OCI-LY7 (cell line): ENCODE measurements at regions of chr9 and their contacts with region 1.

Region 1: DNA sequence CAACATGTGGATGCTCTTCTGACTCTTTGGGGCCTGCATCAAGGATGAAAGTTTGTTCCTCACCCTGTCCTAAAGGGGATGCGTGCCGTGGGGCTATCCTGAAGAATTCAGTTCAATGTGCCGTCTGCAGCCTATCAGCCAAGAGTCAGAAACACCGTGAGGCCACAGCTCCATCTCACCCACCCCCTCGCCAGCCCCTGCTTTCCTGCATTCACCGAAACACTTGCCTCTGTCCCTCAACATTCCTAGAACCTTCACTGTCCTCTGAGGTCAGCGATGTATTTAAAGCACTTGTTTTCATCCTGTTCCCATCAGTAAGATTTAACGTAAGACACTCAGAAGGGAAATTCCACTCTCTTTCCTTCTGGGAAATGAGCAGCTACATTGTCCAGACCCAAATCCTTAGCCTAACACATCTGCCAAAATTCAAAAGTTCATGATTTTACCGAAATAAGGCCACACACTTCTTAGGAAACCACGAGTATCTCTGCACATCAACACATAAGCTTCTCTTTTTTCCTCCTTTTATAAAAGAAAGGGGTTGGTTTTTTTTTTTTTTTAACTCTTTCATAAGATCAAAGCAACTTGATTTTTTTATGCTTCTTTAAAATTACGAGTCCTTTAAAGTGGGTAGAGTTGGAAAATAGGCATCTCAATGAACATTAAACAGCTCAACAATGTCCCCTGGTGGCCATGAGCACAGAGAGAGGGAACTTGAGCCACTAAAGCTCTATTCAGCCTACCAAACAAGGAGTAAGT is 100.7 kb downstream of the SUSD1 start:
- DNase-seq: peak; percentile 58
- H3K4me3 ChIP-seq: no peak overlapping the region
- H3K27ac ChIP-seq: no peak overlapping the region
- H3K4me1 ChIP-seq: peaks cover 8% of the 10 kb centered on the region
- CTCF ChIP-seq: peak; percentile 96

Region 2: GRCh38 chr9:111759762-111760639 is 314.4 kb before region 1 on chr9:
- CTCF ChIA-PET with region 1: interaction called, 6 read pairs
- POLR2A ChIA-PET with region 1: interaction called, 8 read pairs
- intact Hi-C with region 1: loop called (anchors 1 kb)
- DNase-seq: peak; percentile 71
- H3K4me3 ChIP-seq: no peak overlapping the region
- H3K27ac ChIP-seq: no peak overlapping the region
- H3K4me1 ChIP-seq: no peaks in the 10 kb centered on the region
- CTCF ChIP-seq: peak; percentile 85

Region 3: GRCh38 chr9:111878946-111879345 is 195.5 kb before region 1 on chr9:
- CTCF ChIA-PET with region 1: no interaction called
- POLR2A ChIA-PET with region 1: no interaction called
- intact Hi-C with region 1: no loop called
- DNase-seq: no peak
- H3K4me3 ChIP-seq: no peak overlapping the region
- H3K27ac ChIP-seq: no peak overlapping the region
- H3K4me1 ChIP-seq: no peaks in the 10 kb centered on the region
- CTCF ChIP-seq: no peak

Region 4: DNA sequence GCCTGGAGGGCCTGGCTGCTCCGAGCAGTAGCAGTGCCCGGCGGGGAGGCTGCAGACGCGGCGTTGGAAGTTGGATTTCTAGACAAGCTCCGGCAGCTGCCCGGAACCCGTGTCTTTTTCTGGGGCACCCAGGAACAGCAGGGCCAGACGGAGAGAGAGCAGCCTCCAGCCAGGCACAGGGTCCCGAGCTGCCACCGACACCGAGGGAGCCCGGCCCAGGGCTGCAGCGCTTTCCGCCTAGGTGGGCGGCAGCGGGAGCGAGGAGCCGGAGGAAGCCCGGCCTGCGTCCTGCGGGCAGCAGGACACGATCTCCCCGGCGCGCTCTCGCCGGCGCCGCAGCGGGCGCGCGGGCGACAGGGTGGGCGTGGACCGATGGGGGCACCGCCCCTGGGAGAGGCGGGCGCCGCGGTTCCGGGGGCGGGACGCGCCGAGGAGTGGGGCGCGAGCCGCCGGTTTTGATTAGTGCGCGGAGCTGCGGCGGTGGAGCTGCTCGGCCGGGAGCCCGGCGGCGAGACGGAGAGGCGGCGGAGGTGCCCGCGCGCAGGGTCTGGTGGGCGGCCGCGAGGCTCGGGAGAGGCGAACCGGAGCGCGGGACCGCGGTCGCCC is 178.0 kb before region 1 on chr9 and contains the start of gene UGCG:
- CTCF ChIA-PET with region 1: no interaction called
- POLR2A ChIA-PET with region 1: interaction called, 3 read pairs
- intact Hi-C with region 1: loop called (anchors 10 kb)
- DNase-seq: peak; percentile 91
- H3K4me3 ChIP-seq: peak within 1 kb of the TSS; percentile 97
- H3K27ac ChIP-seq: peak within 1 kb of the TSS; percentile 82
- H3K4me1 ChIP-seq: peaks cover 42% of the 10 kb centered on the region
- CTCF ChIP-seq: no peak
- total RNA-seq, gene UGCG: 12.0 and 14.7 TPM in 2 replicates

Region 5: DNA sequence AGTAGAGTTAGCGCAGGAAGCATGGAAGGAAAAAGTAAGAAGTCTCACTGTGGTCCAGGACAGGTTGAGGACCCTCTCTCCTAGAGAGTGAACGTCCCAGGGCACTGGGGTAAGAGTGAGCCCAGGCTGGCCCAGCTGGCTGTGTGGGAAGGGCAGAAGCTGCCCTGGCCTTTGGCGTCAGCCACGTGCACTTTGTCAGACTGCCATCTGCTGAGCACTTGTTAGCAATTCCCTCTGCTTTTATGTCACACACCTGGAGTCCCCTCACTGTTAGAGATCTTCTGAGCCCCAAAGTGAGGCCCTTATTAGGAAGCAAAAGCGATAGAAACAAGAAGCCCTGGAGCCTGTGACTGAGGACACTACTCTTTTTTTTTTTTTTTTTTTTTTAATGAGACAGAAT is 98.7 kb before region 1 on chr9:
- CTCF ChIA-PET with region 1: no interaction called
- POLR2A ChIA-PET with region 1: no interaction called
- intact Hi-C with region 1: loop called (anchors 2 kb)
- DNase-seq: peak; percentile 51
- H3K4me3 ChIP-seq: no peak overlapping the region
- H3K27ac ChIP-seq: no peak overlapping the region
- H3K4me1 ChIP-seq: no peaks in the 10 kb centered on the region
- CTCF ChIP-seq: peak; percentile 68

Region 6: DNA sequence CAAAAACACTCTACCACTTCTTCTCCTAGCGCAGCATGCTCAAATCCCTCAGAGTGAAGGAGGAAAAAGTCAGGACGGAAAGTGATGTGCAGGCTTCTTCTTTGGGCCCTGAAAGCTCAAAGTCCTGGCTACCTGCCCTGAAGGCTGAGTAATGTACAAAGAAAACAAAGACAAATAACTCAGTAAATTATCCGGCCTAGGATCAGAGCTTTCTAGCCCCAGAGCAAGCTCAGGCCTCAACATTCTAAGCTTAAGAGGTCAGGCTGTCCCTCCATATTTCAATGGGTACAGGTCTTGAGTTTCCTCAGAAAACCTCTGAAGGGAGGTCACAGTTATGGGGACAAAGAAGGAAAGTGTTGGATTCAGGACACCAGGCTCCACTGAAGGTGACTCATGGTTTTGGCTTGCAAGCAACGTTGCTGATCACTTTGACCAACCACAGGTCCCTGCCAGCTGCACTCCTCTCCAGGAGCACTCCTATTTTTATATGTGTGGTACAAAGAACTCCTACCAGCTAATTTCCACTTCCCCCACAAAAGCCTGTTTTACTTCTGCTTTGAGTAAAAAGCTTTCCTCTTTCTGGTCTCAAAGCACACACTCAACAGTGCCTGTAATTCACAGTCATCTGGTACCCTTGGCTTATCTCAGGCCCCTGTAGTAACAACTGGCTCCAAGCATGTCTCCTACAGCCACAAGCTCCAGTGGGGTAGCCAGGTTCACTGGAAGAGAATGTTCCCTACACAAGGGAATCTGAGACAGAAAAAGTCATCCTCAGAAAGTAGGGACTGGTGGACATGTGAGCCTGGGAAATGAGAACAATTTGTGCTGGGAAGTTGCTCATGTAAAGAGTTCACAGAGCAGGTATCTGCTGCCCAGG is 62.2 kb before region 1 on chr9:
- CTCF ChIA-PET with region 1: no interaction called
- POLR2A ChIA-PET with region 1: no interaction called
- intact Hi-C with region 1: loop called (anchors 5 kb)
- DNase-seq: peak; percentile 20
- H3K4me3 ChIP-seq: no peak overlapping the region
- H3K27ac ChIP-seq: no peak overlapping the region
- H3K4me1 ChIP-seq: peaks cover 9% of the 10 kb centered on the region
- CTCF ChIP-seq: no peak